Activated CD4-positive, alpha-beta T cell treated with anti-CD3 and anti-CD28 coated beads, Interleukin-2, amount 10 ng/mL, durations not matched to agents 24 days and 14 days (primary cell): ENCODE measurements at regions of chr11 and their contacts with region 1.

Region 1: DNA sequence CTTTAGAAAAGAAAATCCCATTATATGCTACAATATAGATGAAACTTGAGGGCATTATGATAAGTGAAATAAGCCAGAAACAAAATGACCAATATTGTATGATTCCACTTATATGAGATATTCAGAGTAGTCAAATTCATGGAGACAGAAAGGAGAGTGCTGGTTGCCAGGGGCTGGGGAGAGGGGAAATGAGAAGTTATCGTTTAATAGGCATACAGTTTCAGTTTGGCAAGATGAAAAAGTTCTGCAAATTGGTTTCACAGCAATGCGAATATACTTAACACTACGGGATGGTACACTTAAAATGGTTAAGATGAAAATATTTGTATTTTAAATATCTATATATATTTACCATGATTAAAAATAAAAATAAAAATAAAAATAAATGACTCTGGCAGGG is 31.1 kb upstream of the RDX start:
- DNase-seq: no peak
- H3K4me3 Mint-ChIP-seq: peak overlapping the region; percentile 88
- H3K27ac Mint-ChIP-seq: peak overlapping the region; percentile 96
- H3K4me1 Mint-ChIP-seq: peaks cover 19% of the 10 kb centered on the region
- H3K27me3 Mint-ChIP-seq: no peaks in the 10 kb centered on the region

Region 2: GRCh38 chr11:110296226-110297075 is 31.1 kb before region 1 on chr11 and contains the start of gene RDX:
- intact Hi-C with region 1: loop called (anchors 1 kb)
- DNase-seq: peak; percentile 90
- H3K4me3 Mint-ChIP-seq: peak within 1 kb of the TSS; percentile 97
- H3K27ac Mint-ChIP-seq: peak within 1 kb of the TSS; percentile 91
- H3K4me1 Mint-ChIP-seq: peaks cover 38% of the 10 kb centered on the region
- H3K27me3 Mint-ChIP-seq: no peaks in the 10 kb centered on the region
- total RNA-seq, gene RDX: 87.6 and 88.4 TPM in 2 replicates

Region 3: GRCh38 chr11:110311783-110312579 is 15.5 kb before region 1 on chr11:
- intact Hi-C with region 1: loop called (anchors 2 kb)
- DNase-seq: no peak
- H3K4me3 Mint-ChIP-seq: no peak overlapping the region
- H3K27ac Mint-ChIP-seq: peak overlapping the region; percentile 82
- H3K4me1 Mint-ChIP-seq: peaks cover 8% of the 10 kb centered on the region
- H3K27me3 Mint-ChIP-seq: no peaks in the 10 kb centered on the region

Region 4: GRCh38 chr11:110337570-110338193 is 10.2 kb after region 1 on chr11:
- intact Hi-C with region 1: loop called (anchors 1 kb)
- DNase-seq: peak; percentile 80
- H3K4me3 Mint-ChIP-seq: no peak overlapping the region
- H3K27ac Mint-ChIP-seq: peak overlapping the region; percentile 52
- H3K4me1 Mint-ChIP-seq: peaks cover 23% of the 10 kb centered on the region
- H3K27me3 Mint-ChIP-seq: no peaks in the 10 kb centered on the region